WTC11 (cell line): ENCODE measurements at regions of chr12 and their contacts with region 1.

Region 1: DNA sequence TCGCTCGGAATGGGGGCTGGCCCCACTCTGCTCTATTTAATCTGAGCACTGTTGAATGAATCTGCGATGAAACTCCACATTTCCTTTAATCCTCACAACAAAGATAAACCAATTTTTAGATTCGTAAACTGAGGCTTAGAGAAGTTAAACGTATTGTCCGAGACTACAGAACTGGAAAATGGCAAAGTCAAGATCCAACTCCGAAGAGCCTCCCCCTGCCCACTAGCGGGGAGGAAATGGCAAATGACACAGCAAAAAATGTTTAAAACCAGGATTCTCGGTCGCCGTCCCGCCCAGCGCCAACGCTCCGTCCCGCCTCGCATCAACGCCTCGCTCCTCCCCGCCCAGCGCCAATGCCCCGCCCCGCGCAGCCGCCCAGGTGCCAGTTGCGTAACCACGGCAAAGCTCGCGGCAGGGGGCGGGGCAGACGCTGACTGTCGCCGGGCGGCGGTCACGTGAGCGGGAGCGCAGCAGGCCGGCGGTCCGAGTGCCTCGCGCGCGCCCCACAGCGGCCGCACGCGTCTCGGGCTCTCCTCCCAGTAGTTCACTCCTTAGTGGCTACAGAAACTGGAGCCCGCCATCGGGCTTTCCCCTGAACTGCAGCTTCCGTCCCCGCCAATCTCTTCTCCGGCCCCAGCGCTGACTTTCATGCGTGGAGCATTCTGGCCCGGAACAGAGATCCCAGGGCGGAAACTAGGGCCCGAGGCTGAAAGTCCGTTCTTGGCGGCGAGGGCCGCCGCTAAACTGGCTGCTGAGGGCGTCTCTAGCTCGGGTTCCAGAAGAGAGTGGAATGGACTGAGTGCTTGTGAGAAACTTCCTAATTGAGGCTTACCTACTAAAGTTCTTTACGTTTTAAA is 13.6 kb upstream of the LRRC23 start:
- DNase-seq: peak; percentile 99
- ATAC-seq: peak; percentile 92
- H3K4me3 Mint-ChIP-seq: peak overlapping the region; percentile 71
- H3K27ac Mint-ChIP-seq: peak overlapping the region; percentile 99
- H3K4me1 Mint-ChIP-seq: peaks cover 33% of the 10 kb centered on the region
- H3K27me3 Mint-ChIP-seq: peaks cover 4% of the 10 kb centered on the region; the same call in 1 of the 2 replicates
- CTCF ChIP-seq: peak; percentile 35

Region 2: DNA sequence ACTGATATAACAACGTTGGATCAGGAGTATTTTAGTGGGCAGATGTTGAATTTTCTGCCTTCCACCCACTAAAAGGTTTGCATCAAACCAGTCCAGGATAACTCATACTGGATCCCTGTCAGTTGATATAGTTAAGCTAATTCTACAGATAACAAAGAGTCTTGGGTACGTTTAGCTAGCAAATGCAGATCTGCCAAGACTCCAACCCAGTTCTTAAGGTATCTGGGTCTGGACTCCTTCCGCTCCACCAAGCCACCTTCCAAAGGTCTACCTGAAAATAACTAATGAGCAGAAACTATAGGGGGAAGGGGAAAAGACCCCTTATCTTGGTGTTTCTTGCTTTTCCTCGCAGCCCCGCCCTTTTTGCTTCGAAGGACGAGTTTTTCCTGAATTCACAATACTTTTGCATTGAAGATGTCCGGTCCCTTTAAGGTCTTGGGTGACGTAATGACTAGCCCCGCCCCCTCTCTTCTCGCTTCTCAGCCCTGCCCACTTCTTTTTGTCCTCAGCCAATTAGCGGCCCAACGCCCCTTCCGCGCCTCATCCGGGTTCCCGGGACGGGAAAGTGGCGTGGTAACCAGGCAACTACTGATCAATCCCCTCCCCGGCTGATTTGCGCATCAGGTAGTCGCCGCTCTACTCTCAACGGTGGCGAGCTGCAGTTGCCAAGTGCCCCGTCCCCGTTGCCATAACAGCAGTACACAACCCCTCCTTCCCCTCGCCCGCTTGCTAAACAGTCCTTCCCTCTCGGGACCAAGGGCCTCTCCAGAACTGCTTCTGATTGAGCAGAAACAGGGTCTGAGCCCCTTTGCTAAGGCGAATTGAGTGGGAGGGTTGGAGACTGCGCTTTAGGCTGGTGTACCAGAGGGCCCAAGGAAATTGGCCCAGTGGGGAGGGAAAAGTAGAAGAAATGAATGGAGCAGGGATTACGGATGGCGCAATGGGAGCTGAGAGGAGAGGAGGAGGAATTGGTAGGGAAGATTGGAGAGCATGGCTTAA is 13.6 kb after region 1 on chr12 and contains the start of gene LRRC23:
- CTCF ChIA-PET with region 1: interaction called, 53 read pairs
- POLR2A ChIA-PET with region 1: interaction called, 8 read pairs
- DNase-seq: peak; percentile 100
- ATAC-seq: peak; percentile 96
- H3K4me3 Mint-ChIP-seq: no peak within 1 kb of the TSS
- H3K27ac Mint-ChIP-seq: no peak within 1 kb of the TSS; the same call in 1 of the 2 replicates
- H3K4me1 Mint-ChIP-seq: peaks cover 10% of the 10 kb centered on the region
- H3K27me3 Mint-ChIP-seq: peaks cover 6% of the 10 kb centered on the region; the same call in 1 of the 2 replicates
- CTCF ChIP-seq: no peak
- total RNA-seq, gene LRRC23: 3.1 to 5.3 TPM (median 4.9 TPM) in 3 replicates

Region 3: GRCh38 chr12:6937481-6938297 is 46.7 kb after region 1 on chr12:
- CTCF ChIA-PET with region 1: interaction called, 10 read pairs
- POLR2A ChIA-PET with region 1: interaction called, 5 read pairs
- DNase-seq: peak; percentile 94
- ATAC-seq: peak; percentile 83
- H3K4me3 Mint-ChIP-seq: peak overlapping the region; percentile 69
- H3K27ac Mint-ChIP-seq: peak overlapping the region; percentile 93
- H3K4me1 Mint-ChIP-seq: peaks cover 29% of the 10 kb centered on the region
- H3K27me3 Mint-ChIP-seq: no peaks in the 10 kb centered on the region
- CTCF ChIP-seq: peak; percentile 92

Region 4: DNA sequence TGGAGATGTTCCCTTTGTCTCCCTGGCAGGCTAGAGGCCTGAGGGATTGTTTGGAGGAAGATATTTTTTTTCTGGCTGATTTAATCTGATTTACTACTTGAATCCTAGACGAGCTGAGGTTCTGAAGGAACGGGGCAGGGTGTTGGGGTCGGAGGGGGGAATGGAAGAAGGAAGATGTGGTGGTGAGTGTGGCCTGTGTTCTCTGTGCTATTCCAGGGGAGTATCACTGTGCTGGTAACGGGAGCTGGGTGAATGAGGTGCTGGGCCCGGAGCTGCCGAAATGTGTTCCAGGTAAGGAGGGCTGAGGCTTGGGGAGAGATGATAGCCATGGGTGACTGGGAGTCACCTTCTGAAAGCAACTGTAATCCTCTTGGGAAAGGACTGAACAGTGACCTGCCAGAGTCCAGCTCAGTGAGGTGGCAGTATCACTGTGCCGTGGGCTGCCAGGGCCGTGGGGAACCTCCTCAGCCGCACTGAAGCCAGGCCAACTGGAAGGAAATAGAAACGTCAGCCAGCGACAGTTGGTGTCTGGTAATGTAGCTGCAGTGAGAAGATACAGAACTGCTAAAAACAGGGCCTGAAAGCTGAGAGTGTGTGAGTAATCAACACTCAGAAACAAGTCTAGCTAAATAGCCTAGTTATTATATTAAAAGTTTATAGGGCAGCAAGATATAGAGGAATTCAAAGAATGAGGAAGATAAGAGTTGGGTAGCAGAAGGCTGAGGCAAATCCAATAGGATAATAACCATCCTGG is 177.4 kb after region 1 on chr12:
- CTCF ChIA-PET with region 1: no interaction called
- POLR2A ChIA-PET with region 1: no interaction called
- DNase-seq: no peak
- ATAC-seq: no peak
- H3K4me3 Mint-ChIP-seq: no peak overlapping the region
- H3K27ac Mint-ChIP-seq: no peak overlapping the region
- H3K4me1 Mint-ChIP-seq: no peaks in the 10 kb centered on the region
- H3K27me3 Mint-ChIP-seq: peaks cover 8% of the 10 kb centered on the region; the same call in 1 of the 2 replicates
- CTCF ChIP-seq: no peak